MCF 10A (cell line): ENCODE measurements at regions of chr16 and their contacts with region 1.

Region 1: DNA sequence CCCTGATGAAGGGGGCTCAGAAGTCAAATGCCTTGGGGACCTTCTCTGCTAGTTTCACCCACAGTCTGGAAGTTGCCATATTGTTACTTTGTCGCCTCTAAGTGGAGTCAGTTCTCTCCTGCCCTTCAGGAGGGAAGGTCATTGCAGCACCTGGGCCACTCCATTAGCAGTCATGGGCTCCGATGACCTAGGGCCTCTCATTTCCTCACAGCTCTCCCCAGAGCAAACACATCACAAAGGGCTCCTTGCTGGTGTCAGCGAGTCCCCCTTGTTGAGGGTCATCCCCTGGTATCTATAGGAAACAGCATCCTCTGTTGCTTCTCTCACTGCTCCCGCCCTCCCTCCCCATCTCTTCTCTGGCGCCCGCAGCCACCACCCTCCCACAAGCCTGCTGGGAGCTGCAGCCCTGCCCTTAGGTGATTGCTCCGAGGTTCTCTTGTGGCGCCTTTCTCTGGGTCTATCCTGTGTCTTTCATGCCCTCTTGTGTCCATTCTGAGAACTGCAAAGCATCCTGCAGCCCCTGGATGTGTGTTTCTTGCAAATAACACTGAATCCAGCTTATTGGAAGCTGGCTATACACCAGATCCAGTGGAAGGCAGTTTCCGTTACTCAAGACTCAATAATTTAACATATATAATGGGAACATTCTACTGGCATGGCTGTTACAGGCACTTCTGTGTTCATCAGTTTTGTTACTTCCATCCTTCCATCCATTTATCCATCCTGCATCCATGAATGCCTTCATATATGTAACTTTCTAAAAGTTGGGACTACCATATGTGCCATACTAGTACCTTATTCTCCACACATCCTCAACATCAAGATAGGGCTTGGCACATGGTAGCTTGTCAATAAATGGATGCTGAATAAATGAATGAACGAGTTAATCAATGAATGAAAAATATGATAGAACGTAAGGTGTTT is 21.2 kb downstream of the PDILT start:
- DNase-seq: peak; percentile 51
- H3K4me3 Mint-ChIP-seq: no peak overlapping the region
- H3K27ac Mint-ChIP-seq: no peak overlapping the region
- H3K4me1 Mint-ChIP-seq: no peaks in the 10 kb centered on the region
- H3K27me3 Mint-ChIP-seq: peaks cover 28% of the 10 kb centered on the region
- CTCF ChIP-seq: peak; percentile 90

Region 2: DNA sequence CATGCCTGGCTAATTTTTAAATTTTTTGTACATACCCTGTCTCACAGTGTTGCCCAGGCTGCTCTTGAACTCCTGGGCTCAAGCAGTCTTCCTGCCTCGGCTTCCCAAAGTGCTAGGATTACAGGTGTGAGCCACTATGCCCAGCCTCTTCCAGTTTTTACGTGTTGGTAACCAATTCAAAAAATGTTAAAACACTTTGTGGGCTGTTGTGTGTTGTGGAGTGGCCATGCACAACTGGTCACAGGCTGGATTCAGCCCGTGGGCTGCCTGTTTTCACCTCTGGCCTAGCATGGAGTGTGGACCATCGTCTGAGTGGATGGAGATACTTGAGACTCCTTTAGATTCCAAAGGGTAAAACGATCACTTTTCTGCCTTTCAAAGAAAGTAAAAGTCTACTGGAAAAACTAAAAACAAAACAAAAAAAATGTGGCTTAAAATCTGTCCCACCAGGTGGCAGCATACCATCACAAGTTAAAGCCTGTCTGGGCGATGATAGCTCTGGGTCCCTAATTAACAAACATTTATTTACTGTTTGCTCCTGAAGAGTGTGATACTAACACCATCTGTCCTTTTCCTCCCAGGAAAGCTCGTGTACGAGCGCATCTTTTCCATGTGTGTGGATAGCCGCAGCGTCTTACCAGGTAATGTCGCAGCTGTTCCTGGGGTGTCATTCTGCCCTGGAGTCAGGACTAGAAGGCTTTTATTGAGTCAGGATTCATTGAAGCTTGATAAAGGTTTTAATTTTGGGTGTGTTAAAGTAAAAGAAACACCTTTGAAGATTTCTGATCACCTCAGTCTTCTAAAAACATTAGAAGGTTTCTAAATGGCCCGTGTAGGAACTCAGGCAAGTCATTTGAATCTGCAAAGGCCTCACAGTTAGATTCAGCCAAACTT is 782.0 kb before region 1 on chr16:
- CTCF ChIA-PET with region 1: interaction called, 7 read pairs
- POLR2A ChIA-PET with region 1: no interaction called
- intact Hi-C with region 1: loop called (anchors 10 kb)
- DNase-seq: peak; percentile 48
- H3K4me3 Mint-ChIP-seq: no peak overlapping the region
- H3K27ac Mint-ChIP-seq: peak overlapping the region; percentile 27
- H3K4me1 Mint-ChIP-seq: no peaks in the 10 kb centered on the region
- H3K27me3 Mint-ChIP-seq: no peaks in the 10 kb centered on the region
- CTCF ChIP-seq: peak; percentile 55

Region 3: DNA sequence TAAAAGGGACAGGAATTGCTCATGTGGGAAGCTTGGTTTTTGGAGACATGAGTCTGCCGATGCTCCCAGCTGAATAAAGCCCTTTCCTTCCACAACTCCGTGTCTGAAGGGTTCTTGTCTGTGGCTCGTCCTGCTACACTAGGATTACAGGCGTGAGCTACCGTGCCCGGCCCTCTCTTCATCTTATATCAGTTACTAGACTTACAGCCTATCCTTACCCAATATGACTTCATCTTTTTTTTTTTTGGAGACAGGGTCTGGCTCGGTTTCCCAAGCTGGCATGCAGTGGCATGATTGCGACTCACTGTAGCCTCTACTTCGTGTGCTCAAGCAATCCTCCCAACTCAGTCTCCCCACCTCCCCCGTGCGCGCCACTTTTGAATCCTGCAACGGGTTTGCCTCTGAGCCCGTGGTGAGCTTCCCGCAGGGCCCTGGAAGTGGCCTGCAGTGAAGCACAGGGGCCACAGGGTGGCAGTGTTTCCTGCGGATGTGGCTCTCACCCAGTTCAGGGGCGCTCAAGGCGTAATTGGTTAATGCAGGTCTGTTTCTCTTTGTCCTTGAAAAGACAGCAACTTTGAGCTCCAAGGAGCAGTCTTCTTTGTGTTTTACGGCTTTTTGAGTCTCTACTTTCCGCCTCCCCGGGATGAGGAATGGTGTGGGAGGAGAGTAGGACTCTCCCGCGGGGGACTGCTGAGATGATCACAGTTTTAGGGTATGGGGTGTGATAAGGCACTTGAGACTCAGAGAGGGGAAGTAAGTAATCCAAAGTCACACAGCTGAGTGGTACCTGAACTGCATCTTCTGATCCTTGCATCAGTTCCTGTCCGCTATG is 476.0 kb before region 1 on chr16:
- CTCF ChIA-PET with region 1: interaction called, 537 read pairs
- POLR2A ChIA-PET with region 1: interaction called, 3 read pairs
- intact Hi-C with region 1: loop called (anchors 1 kb)
- DNase-seq: peak; percentile 73
- H3K4me3 Mint-ChIP-seq: no peak overlapping the region
- H3K27ac Mint-ChIP-seq: no peak overlapping the region
- H3K4me1 Mint-ChIP-seq: no peaks in the 10 kb centered on the region
- H3K27me3 Mint-ChIP-seq: peaks cover 14% of the 10 kb centered on the region
- CTCF ChIP-seq: peak; percentile 96

Region 4: GRCh38 chr16:20348365-20349185 is 34.8 kb before region 1 on chr16:
- CTCF ChIA-PET with region 1: interaction called, 10 read pairs
- POLR2A ChIA-PET with region 1: no interaction called
- intact Hi-C with region 1: no loop called
- DNase-seq: no peak
- H3K4me3 Mint-ChIP-seq: no peak overlapping the region
- H3K27ac Mint-ChIP-seq: no peak overlapping the region
- H3K4me1 Mint-ChIP-seq: no peaks in the 10 kb centered on the region
- H3K27me3 Mint-ChIP-seq: no peaks in the 10 kb centered on the region
- CTCF ChIP-seq: no peak

Region 5: DNA sequence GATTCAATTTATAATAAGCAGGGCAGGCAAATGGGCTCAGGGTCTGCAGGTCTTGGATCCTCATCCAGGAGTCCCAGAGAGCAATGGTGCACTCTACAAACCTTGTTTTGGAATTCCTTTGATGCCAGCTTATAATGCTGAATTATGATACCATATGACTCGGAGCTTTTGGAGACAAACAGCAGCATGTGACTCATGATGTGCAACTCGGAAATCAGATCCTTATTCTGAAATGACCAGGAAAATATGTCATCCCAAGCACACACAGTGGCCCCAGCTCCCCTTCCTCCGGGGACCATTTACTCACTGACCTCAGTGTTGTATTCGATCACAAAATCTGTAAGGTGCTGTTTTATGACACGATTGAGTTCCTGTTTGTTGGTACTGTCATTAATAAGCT is 10.7 kb before region 1 on chr16:
- CTCF ChIA-PET with region 1: interaction called, 65 read pairs
- POLR2A ChIA-PET with region 1: interaction called, 3 read pairs
- intact Hi-C with region 1: no loop called
- DNase-seq: no peak
- H3K4me3 Mint-ChIP-seq: no peak overlapping the region
- H3K27ac Mint-ChIP-seq: no peak overlapping the region
- H3K4me1 Mint-ChIP-seq: no peaks in the 10 kb centered on the region
- H3K27me3 Mint-ChIP-seq: peaks cover 42% of the 10 kb centered on the region
- CTCF ChIP-seq: no peak

Region 6: DNA sequence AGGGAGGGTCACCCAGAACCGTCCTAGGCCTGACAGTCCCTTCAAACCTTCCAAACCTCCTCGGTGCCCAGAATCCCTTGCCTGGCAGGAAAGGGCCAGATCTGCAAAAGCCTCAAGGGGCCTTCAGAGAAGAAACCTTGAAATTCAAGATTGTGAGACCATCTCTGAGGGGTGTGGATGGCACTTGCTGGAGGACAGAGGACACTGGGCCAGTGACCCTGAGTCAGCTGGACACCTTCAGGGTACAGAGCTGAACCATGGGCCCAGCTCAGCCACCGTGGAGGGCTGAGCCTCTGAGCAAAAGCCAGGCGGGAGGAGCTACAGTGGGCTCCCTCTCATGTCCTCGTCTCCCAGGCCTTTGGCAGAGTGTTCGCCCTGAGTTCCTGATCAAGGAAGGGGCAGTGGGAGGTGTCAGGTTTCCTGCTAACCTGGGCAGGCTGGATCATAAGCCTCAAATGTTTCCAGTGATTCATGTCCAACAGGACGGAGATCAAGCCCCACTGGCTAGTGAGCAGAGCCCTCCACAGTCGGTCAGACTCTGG is 18.2 kb after region 1 on chr16:
- CTCF ChIA-PET with region 1: interaction called, 61 read pairs
- POLR2A ChIA-PET with region 1: no interaction called
- intact Hi-C with region 1: no loop called
- DNase-seq: no peak
- H3K4me3 Mint-ChIP-seq: no peak overlapping the region
- H3K27ac Mint-ChIP-seq: no peak overlapping the region
- H3K4me1 Mint-ChIP-seq: peaks cover under 1% of the 10 kb centered on the region
- H3K27me3 Mint-ChIP-seq: no peaks in the 10 kb centered on the region
- CTCF ChIP-seq: no peak

Region 7: GRCh38 chr16:20741554-20742285 is 358.4 kb after region 1 on chr16 and contains the start of gene THUMPD1:
- CTCF ChIA-PET with region 1: interaction called, 11 read pairs
- POLR2A ChIA-PET with region 1: no interaction called
- intact Hi-C with region 1: no loop called
- DNase-seq: peak; percentile 94
- H3K4me3 Mint-ChIP-seq: peak within 1 kb of the TSS; percentile 93
- H3K27ac Mint-ChIP-seq: peak within 1 kb of the TSS; percentile 81
- H3K4me1 Mint-ChIP-seq: peaks cover 11% of the 10 kb centered on the region
- H3K27me3 Mint-ChIP-seq: no peaks in the 10 kb centered on the region
- CTCF ChIP-seq: no peak
- total RNA-seq, gene THUMPD1: 26.5 and 38.7 TPM in 2 replicates